ENCODE measurements at regions of chr5 and their contacts with region 1.

Region 1: GRCh38 chr5:14650052-14650451 is 14.5 kb upstream of the OTULIN start:
- DNase-seq: no peak
- H3K4me3 ChIP-seq: no peak overlapping the region
- H3K27ac ChIP-seq: no peak overlapping the region
- H3K4me1 ChIP-seq: no peaks in the 10 kb centered on the region
- H3K27me3 ChIP-seq: peaks cover 6% of the 10 kb centered on the region; the same call in 1 of the 2 replicates
- CTCF ChIP-seq: no peak
- EP300 ChIP-seq: no peak
- RAD21 ChIP-seq: no peak

Region 2: DNA sequence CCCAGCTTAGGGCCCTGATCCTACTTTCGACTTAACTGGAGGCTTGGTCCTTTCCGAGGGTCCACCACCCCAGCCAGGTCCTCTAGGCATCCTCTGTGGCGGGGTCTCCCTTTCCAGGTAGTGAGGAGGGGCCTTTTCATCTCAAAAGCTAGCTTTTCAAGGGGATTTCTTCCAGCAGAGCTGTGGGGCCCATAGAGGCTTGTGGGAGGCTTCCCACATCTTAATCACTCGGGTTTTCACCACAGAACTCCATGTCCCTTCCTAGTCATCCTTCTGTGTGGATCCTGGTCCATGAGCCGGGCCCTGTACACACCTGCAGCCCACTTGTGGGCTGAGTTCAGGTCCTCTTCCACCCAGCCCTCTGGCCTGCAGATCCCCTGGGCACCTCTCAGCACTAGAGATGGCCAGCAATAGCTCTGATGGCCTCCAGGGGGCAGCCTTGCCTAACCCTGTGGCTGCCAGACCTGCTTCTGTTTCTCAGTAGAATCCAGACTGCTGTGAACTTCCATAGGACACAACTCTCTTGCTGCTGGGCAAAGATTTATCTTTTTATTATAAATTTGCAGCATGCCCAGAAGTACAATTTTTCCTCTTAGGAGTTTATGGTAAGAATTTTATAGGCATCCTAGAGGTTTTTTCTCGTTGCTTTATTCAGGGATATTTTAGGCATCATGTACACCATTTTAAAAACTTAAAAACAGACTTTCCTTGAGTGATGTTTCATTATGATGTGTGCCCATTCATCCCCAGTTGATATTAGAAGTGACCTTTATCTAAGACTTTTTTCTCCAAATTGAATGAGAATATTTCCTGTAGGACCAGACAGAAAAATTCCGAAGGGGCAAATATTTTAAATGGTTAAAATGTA is 298.0 kb before region 1 on chr5:
- CTCF ChIA-PET with region 1: interaction called, 168 read pairs
- POLR2A ChIA-PET with region 1: no interaction called
- DNase-seq: peak; percentile 83
- H3K4me3 ChIP-seq: no peak overlapping the region
- H3K27ac ChIP-seq: no peak overlapping the region
- H3K4me1 ChIP-seq: peaks cover 6 to 11% of the 10 kb centered on the region in 2 experiments; a peak in 2 of 4 replicates
- H3K27me3 ChIP-seq: no peaks in the 10 kb centered on the region
- CTCF ChIP-seq: peak; percentile 95
- EP300 ChIP-seq: no peak
- RAD21 ChIP-seq: peak; percentile 88

Region 3: DNA sequence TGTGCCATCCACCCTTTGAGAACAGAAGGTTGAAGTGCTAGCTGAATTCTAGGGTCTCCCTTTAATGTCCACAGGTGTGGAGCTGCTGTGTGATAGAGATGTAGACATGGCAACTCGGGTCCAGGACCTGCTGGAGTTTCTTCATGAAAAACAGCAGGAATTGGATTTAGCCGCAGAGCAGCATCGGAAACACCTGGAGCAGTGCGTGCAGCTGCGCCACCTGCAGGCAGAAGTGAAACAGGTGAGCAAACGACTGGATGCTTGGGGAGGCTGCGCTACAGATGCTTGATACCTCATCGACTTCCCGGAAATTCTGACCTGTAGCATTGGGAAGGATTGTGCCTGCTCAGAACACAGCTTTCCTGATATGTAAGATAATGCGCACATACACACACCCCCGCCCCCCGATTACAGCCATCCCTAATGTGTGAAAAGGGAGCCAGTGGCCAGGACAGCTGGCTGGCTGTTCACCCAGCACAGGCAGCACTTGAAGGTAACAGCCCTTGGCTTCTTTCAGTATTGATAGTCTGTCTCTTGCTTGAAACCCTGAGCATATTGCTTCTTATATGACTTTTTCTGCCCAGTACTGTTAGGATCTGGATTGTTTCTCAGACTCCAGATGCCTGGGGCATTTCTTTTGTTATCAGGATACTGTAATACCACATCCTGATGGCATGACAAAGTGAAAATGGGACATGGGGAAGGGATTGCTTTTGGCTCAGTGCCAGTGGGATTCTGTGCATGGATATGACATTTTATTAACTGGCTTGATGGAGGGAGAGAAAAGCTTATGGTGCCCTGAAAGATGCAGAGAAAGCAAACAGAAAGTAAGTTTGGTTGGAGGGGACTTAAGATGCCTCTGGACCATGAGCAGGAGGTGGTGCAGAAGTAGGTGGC is 285.2 kb before region 1 on chr5:
- CTCF ChIA-PET with region 1: interaction called, 168 read pairs
- POLR2A ChIA-PET with region 1: no interaction called
- DNase-seq: peak; percentile 59
- H3K4me3 ChIP-seq: no peak overlapping the region
- H3K27ac ChIP-seq: peak overlapping the region in 1 of 2 experiments; percentile 28; a peak in 1 of 4 replicates
- H3K4me1 ChIP-seq: peaks cover 0 to 11% of the 10 kb centered on the region in 2 experiments; a peak in 2 of 4 replicates
- H3K27me3 ChIP-seq: no peaks in the 10 kb centered on the region
- CTCF ChIP-seq: peak; percentile 60
- EP300 ChIP-seq: no peak
- RAD21 ChIP-seq: no peak

Region 4: GRCh38 chr5:14374100-14374499 is 276.0 kb before region 1 on chr5:
- CTCF ChIA-PET with region 1: interaction called, 68 read pairs
- POLR2A ChIA-PET with region 1: no interaction called
- DNase-seq: no peak
- H3K4me3 ChIP-seq: no peak overlapping the region
- H3K27ac ChIP-seq: no peak overlapping the region
- H3K4me1 ChIP-seq: peaks cover 2 to 9% of the 10 kb centered on the region in 2 experiments; a peak in 2 of 4 replicates
- H3K27me3 ChIP-seq: no peaks in the 10 kb centered on the region
- CTCF ChIP-seq: no peak
- EP300 ChIP-seq: no peak
- RAD21 ChIP-seq: no peak